Thyroid gland (tissue), 4 donors: ENCODE measurements at regions of chr3 and their contacts with region 1.

Region 1: DNA sequence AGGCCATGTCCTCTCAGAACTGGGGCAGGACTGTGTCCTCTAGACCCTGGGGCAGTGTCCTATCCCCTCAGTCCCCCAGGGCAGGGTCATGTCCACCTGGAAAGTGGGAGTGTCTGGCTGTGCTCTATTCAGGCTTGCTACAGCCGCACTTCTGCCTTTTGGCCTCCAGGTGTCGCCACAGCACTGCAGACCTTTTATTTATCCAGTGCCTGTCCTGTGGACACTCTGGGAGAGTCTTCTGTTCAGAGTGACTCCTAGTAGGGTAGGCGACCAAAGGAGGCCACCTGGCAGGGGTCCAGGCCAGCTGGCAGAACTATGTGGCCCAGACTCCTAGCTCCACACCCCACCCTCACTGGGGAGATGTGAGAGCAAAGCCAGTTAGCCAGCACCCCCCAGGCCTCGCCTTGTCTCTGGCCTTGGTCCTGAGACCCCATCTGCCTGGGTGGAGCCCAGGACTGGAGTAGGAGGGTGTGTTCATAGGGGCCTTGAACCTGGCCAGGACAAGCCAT is 3.9 kb downstream of the TMIE start:
- DNase-seq: peak; percentile 78 to 82
- H3K4me3 ChIP-seq: no peak overlapping the region
- H3K27ac ChIP-seq: no peak overlapping the region
- H3K4me1 ChIP-seq: peaks cover 6 to 15% of the 10 kb centered on the region in 2 donors
- H3K27me3 ChIP-seq: no peaks in the 10 kb centered on the region
- CTCF ChIP-seq: peak; percentile 90 to 98 (median 94)
- POLR2A ChIP-seq: no peak

Region 2: DNA sequence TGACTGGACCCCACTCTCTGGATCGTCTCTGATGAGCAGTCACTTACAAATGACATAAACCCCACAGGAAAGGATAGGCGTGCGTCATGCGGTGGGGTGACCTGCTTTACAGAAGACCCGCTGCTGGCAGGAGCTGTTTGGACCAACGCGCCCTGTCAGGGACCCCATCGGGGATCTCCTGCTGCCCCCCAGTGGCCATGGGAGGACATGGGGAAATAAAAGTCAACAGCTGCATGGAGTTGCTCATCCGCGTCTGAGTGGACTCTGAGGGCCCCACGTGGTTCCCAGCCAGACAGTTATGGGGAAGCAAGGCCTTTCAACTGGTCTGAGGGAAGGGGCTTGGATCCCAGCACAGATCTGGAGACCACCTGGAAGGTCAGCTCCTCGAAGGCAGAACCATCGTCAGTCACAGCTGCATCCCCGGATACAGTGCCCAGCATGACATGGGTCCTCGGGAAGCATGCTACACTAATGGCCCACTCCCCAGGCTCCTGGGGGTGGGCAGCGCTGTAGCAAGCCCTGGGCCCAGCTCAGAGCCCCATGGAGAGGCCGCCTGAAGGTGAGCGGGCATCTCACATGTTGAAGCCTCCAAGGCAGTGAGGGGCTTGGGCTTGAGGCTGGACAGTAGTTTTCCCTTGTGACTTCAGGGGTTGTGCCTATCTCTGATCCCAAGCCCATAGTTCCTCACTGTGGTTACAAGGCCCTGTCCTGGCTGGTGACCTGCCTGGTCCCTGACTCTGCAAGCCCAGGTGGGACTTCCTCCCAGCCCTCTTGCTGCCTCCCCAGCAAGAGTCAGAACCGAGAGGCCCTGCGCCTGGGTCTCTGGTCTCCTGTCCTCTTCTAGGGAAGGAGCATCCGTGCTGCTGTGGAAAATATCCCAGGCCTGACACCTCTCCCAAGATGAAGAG is 204.7 kb after region 1 on chr3:
- intact Hi-C with region 1: loop called (anchors 5 kb)
- DNase-seq: peak; percentile 94 to 96
- H3K4me3 ChIP-seq: no peak overlapping the region
- H3K27ac ChIP-seq: no peak overlapping the region
- H3K4me1 ChIP-seq: peaks cover 12 to 32% of the 10 kb centered on the region in 2 donors
- H3K27me3 ChIP-seq: no peaks in the 10 kb centered on the region
- CTCF ChIP-seq: peak; percentile 82 to 97 (median 94)
- POLR2A ChIP-seq: no peak

Region 3: DNA sequence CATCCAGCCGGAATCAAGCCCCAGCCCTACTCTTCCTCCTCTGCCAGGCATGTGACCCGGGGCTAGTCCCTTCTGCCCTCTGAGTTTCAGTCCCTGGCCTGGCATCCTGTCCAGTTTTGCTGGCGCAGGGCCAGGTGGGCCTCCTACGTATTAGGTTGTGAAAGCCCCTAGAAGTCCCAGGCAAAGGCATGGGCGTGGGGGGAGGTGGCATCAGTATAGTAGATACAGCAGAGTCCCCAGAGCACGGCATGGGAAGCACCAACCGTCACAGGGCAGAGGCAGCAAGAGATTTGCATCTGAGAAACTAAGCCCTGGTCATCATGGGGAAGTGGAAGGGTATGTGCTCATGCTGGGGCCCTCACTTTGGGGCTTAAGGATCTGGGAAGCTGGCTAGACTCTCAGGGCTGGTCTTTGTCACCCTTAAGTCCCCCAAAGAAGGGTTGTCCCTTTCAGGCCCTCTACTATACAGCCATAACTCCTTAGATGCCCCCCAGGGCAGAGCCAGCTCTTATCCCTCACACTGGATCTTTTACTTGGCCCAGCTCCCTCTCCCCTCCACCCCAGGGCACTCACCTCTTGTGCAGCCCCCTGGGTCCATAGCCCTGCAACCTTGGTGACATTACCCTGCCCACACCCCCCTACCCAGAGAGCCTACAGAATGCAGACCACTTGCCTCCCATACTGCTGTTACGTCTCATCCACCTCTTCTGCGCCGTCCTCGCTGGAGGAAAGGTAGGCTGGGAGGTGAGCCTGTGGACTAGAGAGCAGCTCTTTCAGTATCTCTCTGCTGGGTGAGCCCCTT is 285.7 kb after region 1 on chr3:
- intact Hi-C with region 1: loop called (anchors 5 kb)
- DNase-seq: no peak
- H3K4me3 ChIP-seq: no peak overlapping the region
- H3K27ac ChIP-seq: no peak overlapping the region
- H3K4me1 ChIP-seq: peaks cover 0 to 12% of the 10 kb centered on the region in 2 donors
- H3K27me3 ChIP-seq: no peaks in the 10 kb centered on the region
- CTCF ChIP-seq: no peak
- POLR2A ChIP-seq: no peak